Sciatic nerve (tissue), 2 donors: ENCODE measurements at regions of chr1 and their contacts with region 1.

Region 1: DNA sequence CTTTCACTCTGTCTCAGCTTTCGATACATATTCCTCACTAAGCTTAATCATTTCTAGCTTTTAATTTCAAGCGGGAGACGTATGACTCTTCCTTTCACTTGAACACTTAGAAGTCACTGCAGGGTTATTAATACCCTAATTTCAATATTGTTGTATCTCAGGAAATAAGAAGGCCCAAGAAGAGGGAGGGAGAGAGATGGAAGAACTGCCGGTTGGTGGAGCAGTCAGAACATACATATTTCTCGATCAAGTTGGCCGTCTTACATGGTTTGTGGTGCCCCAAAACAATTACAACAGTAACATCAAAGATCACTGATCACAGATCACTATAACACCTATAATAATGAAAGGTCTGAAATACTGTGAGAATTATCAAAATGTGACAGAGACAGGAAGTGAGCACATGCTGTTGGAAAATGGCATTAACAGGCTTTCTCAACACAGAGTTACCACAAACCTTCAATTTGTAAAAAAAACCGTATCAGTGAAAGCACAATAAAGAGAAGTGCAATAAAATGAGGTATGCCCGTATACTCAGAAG is 145.4 kb upstream of the HP1BP3 start:
- DNase-seq: no peak
- ATAC-seq: no peak

Region 2: GRCh38 chr1:19661721-19662228 is 1270.7 kb before region 1 on chr1:
- intact Hi-C with region 1: loop called (anchors 5 kb)
- DNase-seq: no peak
- ATAC-seq: no peak

Region 3: GRCh38 chr1:21058035-21058793 is 125.7 kb after region 1 on chr1:
- intact Hi-C with region 1: no loop called
- DNase-seq: no peak
- ATAC-seq: no peak